CD4-positive, alpha-beta memory T cell (primary cell): ENCODE measurements at regions of chr9 and their contacts with region 1.

Region 1: DNA sequence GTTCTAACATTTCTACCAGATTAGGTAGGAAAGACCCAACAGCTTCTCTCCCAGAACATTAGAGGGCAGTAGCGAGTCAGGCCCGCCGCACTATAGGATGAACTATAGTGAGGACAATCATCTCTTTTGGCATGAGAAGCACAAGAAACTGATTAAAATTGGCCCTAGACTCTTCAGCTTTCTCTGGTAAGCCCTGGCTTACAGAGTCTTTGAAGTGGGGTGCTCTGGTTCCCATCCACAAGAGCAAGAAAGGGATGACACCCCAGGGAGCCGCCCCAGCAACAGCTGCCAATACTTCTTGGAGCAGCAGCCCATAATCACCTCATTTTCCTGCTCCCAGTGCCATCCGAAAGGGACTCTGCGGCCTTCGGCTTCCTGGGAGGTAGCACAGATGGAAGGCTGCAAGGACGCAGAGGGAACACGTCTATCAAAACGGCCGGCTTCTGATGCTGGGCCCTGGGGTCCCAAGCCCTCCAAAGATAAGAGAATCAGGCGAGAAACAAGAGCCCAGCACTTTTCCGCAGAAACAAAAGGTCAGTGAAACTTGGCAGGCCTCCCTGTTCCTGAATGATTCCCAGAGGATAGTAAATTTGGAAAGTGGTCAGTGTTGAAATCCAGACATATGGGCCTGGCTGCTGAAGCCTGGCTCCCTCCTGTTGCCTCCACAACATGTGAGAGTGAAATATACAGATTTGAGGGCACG is 69.3 kb downstream of the HSD17B3 start:
- DNase-seq: peak in 4 of 5 donors; percentile 25 to 35 (median 30)
- H3K4me3 ChIP-seq: no peak overlapping the region
- H3K4me3 Mint-ChIP-seq: no peak overlapping the region
- H3K27ac ChIP-seq: no peak overlapping the region
- H3K27ac Mint-ChIP-seq: no peak overlapping the region
- H3K4me1 ChIP-seq: no peaks in the 10 kb centered on the region
- H3K4me1 Mint-ChIP-seq: peaks cover 0 to 1% (median under 1%) of the 10 kb centered on the region in 4 donors
- H3K27me3 ChIP-seq: no peaks in the 10 kb centered on the region
- H3K27me3 Mint-ChIP-seq: peaks cover 27 to 30% of the 10 kb centered on the region in 2 donors

Region 2: DNA sequence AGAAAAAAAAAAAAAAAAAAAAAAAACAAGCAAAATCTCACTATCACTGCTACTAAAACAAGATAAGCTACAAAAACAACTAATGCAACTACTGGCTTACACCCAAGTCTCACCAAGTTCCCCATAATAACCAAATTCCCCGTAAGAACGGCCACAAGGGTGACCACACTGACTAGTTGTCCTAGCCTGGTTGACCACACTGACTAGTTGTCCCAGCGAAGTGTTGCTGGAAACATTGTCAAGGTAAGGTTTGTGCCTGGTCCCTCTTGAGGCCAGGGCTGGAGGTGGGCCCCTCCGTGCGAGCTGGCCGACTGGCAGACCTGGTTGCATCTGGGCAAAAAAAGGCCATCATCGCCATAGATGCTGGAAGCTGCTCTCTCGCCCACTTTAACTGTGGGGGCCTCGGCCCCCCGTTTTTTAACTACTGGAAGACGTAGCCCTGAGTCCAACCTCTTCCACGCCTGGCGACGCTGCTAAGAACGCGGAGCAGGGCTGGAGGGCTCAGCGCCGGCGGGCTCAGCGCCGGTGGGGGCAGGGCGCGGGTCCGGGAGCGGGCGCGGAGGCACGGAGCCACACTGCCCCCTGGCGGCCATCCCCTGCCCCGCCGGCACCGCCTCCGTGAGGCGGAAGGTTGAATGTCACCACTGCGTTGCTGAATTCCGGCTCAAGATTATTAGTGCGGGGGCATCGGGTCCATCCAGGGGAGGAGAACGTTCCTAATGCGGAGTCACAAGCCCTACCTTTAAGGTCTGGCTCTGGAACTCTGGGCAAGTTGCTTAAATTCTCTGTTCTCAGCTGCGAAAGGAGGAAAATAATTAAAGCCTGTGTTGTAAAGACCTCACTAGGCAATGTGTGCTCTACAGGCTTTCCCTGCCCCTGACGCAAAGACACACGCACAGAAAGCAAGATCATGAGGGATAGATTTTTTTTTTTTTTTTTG is 14.7 kb before region 1 on chr9:
- CTCF ChIA-PET with region 1: interaction called, 27 read pairs
- POLR2A ChIA-PET with region 1: no interaction called
- intact Hi-C with region 1: no loop called
- DNase-seq: peak in 4 of 5 donors; percentile 62 to 65 (median 64)
- H3K4me3 ChIP-seq: peak overlapping the region in 1 of 2 donors; percentile 14
- H3K4me3 Mint-ChIP-seq: peak overlapping the region; percentile 59 to 89 (median 74)
- H3K27ac ChIP-seq: no peak overlapping the region
- H3K27ac Mint-ChIP-seq: peak overlapping the region in 2 of 7 donors; percentile 53 to 81
- H3K4me1 ChIP-seq: peaks cover 9% of the 10 kb centered on the region
- H3K4me1 Mint-ChIP-seq: peaks cover 3 to 18% (median 6%) of the 10 kb centered on the region in 4 donors
- H3K27me3 ChIP-seq: peaks cover 10% of the 10 kb centered on the region
- H3K27me3 Mint-ChIP-seq: peaks cover 28 to 39% of the 10 kb centered on the region in 2 donors

Region 3: GRCh38 chr9:96245399-96245798 is 12.7 kb after region 1 on chr9:
- CTCF ChIA-PET with region 1: interaction called, 10 read pairs
- POLR2A ChIA-PET with region 1: no interaction called
- intact Hi-C with region 1: no loop called
- DNase-seq: no peak
- H3K4me3 ChIP-seq: no peak overlapping the region
- H3K4me3 Mint-ChIP-seq: no peak overlapping the region
- H3K27ac ChIP-seq: no peak overlapping the region
- H3K27ac Mint-ChIP-seq: no peak overlapping the region
- H3K4me1 ChIP-seq: peaks cover 14% of the 10 kb centered on the region
- H3K4me1 Mint-ChIP-seq: peaks cover 2 to 14% (median 10%) of the 10 kb centered on the region in 4 donors
- H3K27me3 ChIP-seq: peaks cover 5% of the 10 kb centered on the region
- H3K27me3 Mint-ChIP-seq: peaks cover 28 to 31% of the 10 kb centered on the region in 2 donors

Region 4: DNA sequence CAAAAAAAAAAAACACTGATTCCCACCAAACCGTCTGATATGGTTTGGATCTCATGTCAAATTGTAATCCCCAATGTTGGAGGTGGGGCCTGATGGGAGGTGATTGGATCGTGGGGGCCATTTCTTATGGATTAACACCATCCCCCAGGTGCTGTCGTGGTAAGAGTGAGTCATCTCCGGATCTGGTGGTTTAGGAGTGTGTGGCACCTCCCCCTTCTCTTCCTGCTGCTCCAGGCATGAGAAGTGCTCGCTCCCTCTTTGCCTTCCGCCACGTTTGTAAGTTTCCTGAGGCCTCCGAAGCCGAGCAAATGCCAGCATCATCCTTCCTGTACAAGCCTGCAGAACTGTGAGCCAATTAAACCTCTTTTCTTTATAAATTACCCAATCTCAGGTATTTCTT is 24.1 kb after region 1 on chr9:
- CTCF ChIA-PET with region 1: no interaction called
- POLR2A ChIA-PET with region 1: no interaction called
- intact Hi-C with region 1: no loop called
- DNase-seq: no peak
- H3K4me3 ChIP-seq: no peak overlapping the region
- H3K4me3 Mint-ChIP-seq: peak overlapping the region in 2 of 8 donors; percentile 13 to 43
- H3K27ac ChIP-seq: no peak overlapping the region
- H3K27ac Mint-ChIP-seq: peak overlapping the region in 1 of 7 donors; percentile 60
- H3K4me1 ChIP-seq: no peaks in the 10 kb centered on the region
- H3K4me1 Mint-ChIP-seq: peaks cover 2 to 9% (median 4%) of the 10 kb centered on the region in 4 donors
- H3K27me3 ChIP-seq: no peaks in the 10 kb centered on the region
- H3K27me3 Mint-ChIP-seq: peaks cover 17 to 20% of the 10 kb centered on the region in 2 donors

Region 5: DNA sequence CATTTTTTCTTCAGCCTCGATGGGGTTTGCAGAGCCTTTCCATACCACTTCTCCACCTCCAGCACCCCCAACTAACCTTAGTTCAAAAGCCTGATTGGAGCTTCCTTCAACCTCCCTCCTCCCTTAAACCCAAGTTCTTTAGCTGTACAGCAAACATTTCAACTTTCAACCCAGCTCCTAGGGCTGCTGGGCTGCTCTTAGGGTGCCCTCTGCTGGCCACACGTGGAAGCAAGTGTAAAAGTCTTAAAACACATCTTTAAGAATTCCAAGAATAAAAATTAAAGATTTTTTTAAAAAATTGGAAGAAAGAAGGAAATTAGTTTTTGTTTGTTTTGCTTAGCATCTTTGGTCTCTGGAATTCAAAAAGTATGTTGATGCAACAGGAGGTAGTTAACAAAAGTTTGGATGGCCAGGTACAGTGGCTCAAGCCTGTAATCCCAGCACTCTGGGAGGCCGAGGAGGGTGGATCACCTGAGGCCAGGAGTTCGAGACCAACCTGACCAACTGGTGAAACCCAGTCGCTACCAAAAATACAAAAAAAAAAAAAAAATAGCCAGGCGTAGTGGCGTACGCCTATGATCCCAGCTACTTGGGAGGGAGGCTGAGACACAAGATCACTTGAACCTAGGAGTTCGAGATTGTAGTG is 84.8 kb after region 1 on chr9:
- CTCF ChIA-PET with region 1: interaction called, 13 read pairs
- POLR2A ChIA-PET with region 1: no interaction called
- intact Hi-C with region 1: loop called (anchors 1 kb)
- DNase-seq: peak in 4 of 5 donors; percentile 24 to 40 (median 30)
- H3K4me3 ChIP-seq: no peak overlapping the region
- H3K4me3 Mint-ChIP-seq: no peak overlapping the region
- H3K27ac ChIP-seq: no peak overlapping the region
- H3K27ac Mint-ChIP-seq: peak overlapping the region in 2 of 7 donors; percentile 5 to 76
- H3K4me1 ChIP-seq: no peaks in the 10 kb centered on the region
- H3K4me1 Mint-ChIP-seq: peaks cover 0 to 2% (median 0%) of the 10 kb centered on the region in 4 donors
- H3K27me3 ChIP-seq: no peaks in the 10 kb centered on the region
- H3K27me3 Mint-ChIP-seq: peaks cover 0 to 2% of the 10 kb centered on the region in 2 donors

Region 6: DNA sequence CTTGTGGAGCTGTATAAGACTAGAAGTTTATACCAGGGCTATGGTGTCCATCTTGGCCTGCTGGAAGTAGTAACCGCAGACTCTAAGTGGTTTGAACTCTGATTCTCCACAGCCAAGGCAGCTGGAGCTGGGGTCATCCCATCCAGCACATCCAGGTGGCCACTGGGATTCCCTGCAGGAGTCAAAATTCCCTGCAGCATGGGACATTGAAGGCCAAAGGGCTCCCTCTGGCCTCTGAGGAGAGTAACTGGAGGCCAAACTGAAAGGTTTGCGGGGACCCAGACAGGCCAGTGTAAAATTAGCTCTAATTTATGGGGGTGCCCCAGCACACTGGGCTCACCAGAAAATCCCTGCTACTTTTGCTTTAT is 434.7 kb after region 1 on chr9:
- CTCF ChIA-PET with region 1: interaction called, 3 read pairs
- POLR2A ChIA-PET with region 1: no interaction called
- intact Hi-C with region 1: loop called (anchors 1 kb)
- DNase-seq: no peak
- H3K4me3 ChIP-seq: no peak overlapping the region
- H3K4me3 Mint-ChIP-seq: no peak overlapping the region
- H3K27ac ChIP-seq: no peak overlapping the region
- H3K27ac Mint-ChIP-seq: peak overlapping the region in 1 of 7 donors; percentile 61
- H3K4me1 ChIP-seq: no peaks in the 10 kb centered on the region
- H3K4me1 Mint-ChIP-seq: peaks cover 0 to 2% (median 0%) of the 10 kb centered on the region in 4 donors
- H3K27me3 ChIP-seq: no peaks in the 10 kb centered on the region
- H3K27me3 Mint-ChIP-seq: peaks cover 3 to 8% of the 10 kb centered on the region in 2 donors